ENCODE measurements at regions of chr11 and their contacts with region 1.

Region 1: DNA sequence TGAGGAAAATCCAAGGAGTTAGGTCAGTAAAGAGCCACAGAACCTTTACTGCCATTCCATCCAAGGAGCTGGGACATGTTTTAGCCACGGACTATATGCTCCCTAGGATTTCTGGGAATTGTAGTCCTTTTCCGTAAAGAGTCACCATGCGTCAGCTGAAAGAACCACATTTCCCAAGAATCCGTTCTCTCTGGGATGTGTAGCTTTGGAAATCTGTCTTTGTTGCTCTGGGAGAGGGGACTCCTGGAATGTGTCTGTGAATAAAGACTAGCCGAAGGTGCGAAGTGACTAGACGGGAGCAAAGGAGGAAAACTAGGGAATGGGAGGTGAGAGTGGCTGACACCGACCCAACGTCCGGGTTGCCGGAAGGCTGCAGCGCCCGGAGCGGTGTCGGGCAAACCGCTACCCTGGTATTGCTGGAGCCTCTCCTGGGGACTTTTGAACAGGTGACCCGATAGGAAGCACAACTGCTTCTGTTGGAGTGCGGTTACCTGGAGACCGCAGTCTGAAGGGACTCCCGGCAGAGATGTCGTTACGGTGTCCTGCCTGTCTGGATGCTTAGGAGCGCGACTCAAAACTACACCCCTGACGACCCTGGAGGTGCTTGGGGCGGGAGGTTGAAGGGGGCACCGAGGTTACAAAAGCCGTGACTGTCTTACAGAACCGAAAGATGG is at the start of gene IFTAP:
- ATAC-seq: peak; percentile 99 to 100 (median 99)
- H3K4me3 ChIP-seq: peak within 1 kb of the TSS; percentile 59 to 86 (median 73)
- H3K27ac ChIP-seq: peak within 1 kb of the TSS; percentile 28 to 44
- H3K4me1 ChIP-seq: peaks cover 0 to 9% of the 10 kb centered on the region in 2 donors
- total RNA-seq, gene IFTAP: 27.3 to 65.5 (median 54.0) TPM

Region 2: DNA sequence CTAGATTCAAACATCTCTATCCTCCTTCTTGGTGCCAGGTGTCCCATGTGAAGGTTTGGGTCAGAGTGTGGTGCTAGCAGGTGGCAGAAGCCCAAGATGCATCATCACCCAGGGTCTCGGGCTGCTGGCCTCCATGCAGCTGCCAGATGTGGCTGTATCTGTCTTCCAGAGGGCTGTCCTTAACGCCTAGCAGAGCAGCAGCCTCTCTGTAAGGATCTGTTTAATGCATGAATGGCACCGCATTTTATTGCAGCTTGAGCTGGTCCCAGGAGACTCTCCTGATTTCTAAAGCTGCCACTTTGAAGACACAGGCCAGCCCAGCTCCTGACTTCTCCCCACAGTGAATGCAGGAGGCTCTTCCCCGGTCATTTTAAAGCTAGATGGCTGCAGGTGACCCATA is 1201.4 kb before region 1 on chr11:
- in situ Hi-C with region 1: no loop called
- ATAC-seq: peak; percentile 12 to 94 (median 70)
- H3K4me3 ChIP-seq: no peak overlapping the region
- H3K27ac ChIP-seq: no peak overlapping the region
- H3K4me1 ChIP-seq: peaks cover 9 to 18% of the 10 kb centered on the region in 2 donors

Region 3: DNA sequence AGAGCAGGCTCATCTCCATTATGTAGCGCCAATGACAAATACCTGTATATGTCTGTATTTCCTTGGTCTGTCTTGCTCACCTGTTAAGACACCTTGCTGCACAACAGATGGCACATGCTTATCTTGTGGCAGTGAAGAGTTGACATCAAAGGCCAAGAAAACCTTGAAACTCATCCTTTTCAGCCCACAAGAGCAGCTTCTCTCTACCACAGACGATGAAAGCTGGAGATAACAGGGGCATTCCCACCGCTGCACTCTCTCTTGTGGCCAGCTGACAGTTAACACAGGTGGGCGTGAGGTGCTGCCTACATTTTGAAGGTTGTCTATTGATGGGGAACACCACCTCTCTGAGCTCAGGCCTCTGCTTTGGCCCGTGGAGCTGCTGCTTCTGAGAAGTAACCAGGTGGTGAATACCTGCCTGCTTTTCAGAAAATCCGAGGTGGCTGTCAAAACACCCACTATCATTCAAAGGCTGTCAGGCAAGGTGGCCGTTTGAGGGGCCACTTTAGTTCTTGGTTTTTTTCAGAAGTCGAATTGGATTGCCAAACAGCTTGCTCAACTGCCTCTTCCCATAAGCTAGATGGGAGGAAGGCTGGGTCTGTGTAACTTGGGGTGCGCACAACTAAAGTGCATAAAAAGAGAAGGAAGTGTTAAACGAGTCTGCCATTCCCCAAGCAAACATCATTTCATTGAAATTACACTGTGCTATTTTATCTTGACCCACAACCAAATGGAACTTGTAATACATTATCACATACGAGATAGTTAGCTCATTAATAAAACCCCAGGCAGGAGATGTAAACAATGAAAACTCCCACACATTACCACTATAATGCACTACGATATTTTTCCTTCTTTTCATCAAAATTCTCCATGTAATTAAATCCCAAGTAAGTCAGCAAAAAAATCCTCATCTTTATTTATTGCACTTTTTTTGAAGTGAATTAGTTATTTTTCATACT is 90.7 kb after region 1 on chr11:
- in situ Hi-C with region 1: loop called in 1 of 9 experiments (anchors 25 kb)
- ATAC-seq: no peak
- H3K4me3 ChIP-seq: no peak overlapping the region
- H3K27ac ChIP-seq: no peak overlapping the region
- H3K4me1 ChIP-seq: no peaks in the 10 kb centered on the region

Region 4: GRCh38 chr11:37409124-37409523 is 814.7 kb after region 1 on chr11:
- in situ Hi-C with region 1: no loop called
- ATAC-seq: no peak
- H3K4me3 ChIP-seq: no peak overlapping the region
- H3K27ac ChIP-seq: no peak overlapping the region
- H3K4me1 ChIP-seq: no peaks in the 10 kb centered on the region